Activated CD4-positive, alpha-beta memory T cell treated with anti-CD3 and anti-CD28 coated beads for 36 hours (primary cell): ENCODE measurements at regions of chr3 and their contacts with region 1.

Region 1: GRCh38 chr3:71444028-71444860 is 139.3 kb downstream of the FOXP1 start:
- DNase-seq: peak; percentile 79
- H3K4me3 Mint-ChIP-seq: peak overlapping the region; percentile 65
- H3K27ac Mint-ChIP-seq: peak overlapping the region; percentile 95
- H3K4me1 Mint-ChIP-seq: peaks cover 87% of the 10 kb centered on the region
- H3K27me3 Mint-ChIP-seq: no peaks in the 10 kb centered on the region

Region 2: DNA sequence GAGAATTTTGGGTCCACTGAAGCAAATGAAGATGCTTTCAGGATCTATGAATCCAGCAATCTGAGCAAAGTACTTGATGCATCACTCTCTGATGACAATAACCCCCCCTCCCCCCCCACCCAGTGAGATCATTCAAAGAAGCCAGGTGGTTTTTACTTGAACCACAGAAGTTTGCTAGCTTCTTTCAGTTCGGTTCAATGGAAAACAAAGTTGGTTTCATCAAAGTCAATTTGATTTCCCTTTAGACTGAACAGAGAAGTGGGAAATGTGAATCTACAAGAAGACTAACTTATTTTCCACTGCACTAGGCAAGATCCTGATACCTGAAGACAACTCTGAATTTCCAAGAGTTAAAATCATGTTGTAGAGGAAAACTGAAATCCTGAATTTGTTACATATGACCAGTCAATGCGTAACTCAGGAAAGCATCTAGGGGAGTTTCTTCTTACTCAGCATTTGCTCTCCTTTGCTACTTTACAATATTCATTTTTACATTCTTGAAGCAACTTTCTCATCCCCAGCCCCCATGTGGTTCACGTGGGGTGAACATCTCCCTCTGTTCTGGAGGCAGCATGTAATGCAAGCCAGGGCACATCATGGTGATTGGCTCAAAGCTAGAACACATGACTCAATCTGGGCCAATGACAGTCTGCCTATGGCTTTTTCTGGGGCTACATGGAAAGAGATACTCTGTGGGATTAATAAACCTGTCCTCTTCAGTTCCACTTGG is 433.4 kb before region 1 on chr3:
- CTCF ChIA-PET with region 1: no interaction called
- POLR2A ChIA-PET with region 1: no interaction called
- intact Hi-C with region 1: loop called (anchors 5 kb)
- DNase-seq: peak; percentile 87
- H3K4me3 Mint-ChIP-seq: peak overlapping the region; percentile 56
- H3K27ac Mint-ChIP-seq: peak overlapping the region; percentile 92
- H3K4me1 Mint-ChIP-seq: peaks cover 68% of the 10 kb centered on the region
- H3K27me3 Mint-ChIP-seq: no peaks in the 10 kb centered on the region

Region 3: GRCh38 chr3:71397046-71397445 is 47.2 kb before region 1 on chr3:
- CTCF ChIA-PET with region 1: no interaction called
- POLR2A ChIA-PET with region 1: interaction called, 4 read pairs
- intact Hi-C with region 1: loop called (anchors 2 kb)
- DNase-seq: no peak
- H3K4me3 Mint-ChIP-seq: no peak overlapping the region
- H3K27ac Mint-ChIP-seq: no peak overlapping the region
- H3K4me1 Mint-ChIP-seq: peaks cover 72% of the 10 kb centered on the region
- H3K27me3 Mint-ChIP-seq: peaks cover 2% of the 10 kb centered on the region

Region 4: DNA sequence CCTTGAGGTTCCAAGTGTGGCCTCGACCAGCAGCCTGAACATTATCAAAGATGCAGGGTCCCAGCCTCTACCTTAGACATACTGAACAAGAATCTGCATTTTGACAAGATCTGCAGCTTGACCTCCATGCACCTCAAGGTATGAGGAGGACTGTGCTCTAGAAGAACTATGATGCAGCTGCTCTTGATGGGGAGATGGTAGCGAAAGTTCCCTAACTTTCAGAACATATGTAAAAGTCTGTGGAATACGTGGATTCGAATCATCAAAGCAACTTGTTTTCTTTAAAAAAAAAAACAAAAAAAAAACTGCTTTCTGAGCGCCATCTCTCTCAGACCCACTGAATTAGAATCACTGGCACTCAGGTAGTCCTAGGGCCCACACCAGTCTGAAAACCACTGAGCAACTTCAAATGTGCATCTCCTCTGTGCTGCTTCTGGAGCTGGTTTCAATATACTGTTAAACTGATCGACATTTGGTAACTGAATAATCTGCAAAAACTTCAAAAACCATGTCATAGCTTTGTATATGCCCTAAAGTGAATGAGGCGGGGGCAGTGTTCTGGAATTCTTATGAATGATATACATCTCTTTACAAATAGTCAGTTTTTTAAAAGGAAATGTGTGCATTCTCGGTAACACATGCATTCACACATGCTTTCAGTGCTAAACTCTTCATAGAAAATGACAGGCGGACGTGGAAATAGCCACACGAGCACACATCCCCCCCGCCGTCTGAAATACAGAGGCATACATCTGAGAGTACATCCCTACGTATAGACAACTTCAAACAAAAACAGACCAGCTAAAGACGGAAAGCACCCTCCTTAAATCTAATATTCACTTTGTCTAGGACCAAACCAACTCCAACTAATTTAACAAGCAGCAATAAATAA is 10.5 kb after region 1 on chr3:
- CTCF ChIA-PET with region 1: interaction called, 5 read pairs
- POLR2A ChIA-PET with region 1: interaction called, 8 read pairs
- intact Hi-C with region 1: loop called (anchors 1 kb)
- DNase-seq: peak; percentile 45
- H3K4me3 Mint-ChIP-seq: peak overlapping the region; percentile 71
- H3K27ac Mint-ChIP-seq: peak overlapping the region; percentile 90
- H3K4me1 Mint-ChIP-seq: peaks cover 94% of the 10 kb centered on the region
- H3K27me3 Mint-ChIP-seq: no peaks in the 10 kb centered on the region

Region 5: GRCh38 chr3:71478568-71478967 is 34.3 kb after region 1 on chr3:
- CTCF ChIA-PET with region 1: interaction called, 4 read pairs
- POLR2A ChIA-PET with region 1: interaction called, 3 read pairs
- intact Hi-C with region 1: loop called (anchors 2 kb)
- DNase-seq: peak; percentile 89
- H3K4me3 Mint-ChIP-seq: peak overlapping the region; percentile 33
- H3K27ac Mint-ChIP-seq: peak overlapping the region; percentile 84
- H3K4me1 Mint-ChIP-seq: peaks cover 66% of the 10 kb centered on the region
- H3K27me3 Mint-ChIP-seq: no peaks in the 10 kb centered on the region

Region 6: GRCh38 chr3:71520161-71521020 is 76.1 kb after region 1 on chr3:
- CTCF ChIA-PET with region 1: no interaction called
- POLR2A ChIA-PET with region 1: no interaction called
- intact Hi-C with region 1: no loop called
- DNase-seq: peak; percentile 27
- H3K4me3 Mint-ChIP-seq: no peak overlapping the region
- H3K27ac Mint-ChIP-seq: no peak overlapping the region
- H3K4me1 Mint-ChIP-seq: peaks cover 9% of the 10 kb centered on the region
- H3K27me3 Mint-ChIP-seq: no peaks in the 10 kb centered on the region